Heart right ventricle (tissue), 16 donors: ENCODE measurements at regions of chr1 and their contacts with region 1.

Region 1: DNA sequence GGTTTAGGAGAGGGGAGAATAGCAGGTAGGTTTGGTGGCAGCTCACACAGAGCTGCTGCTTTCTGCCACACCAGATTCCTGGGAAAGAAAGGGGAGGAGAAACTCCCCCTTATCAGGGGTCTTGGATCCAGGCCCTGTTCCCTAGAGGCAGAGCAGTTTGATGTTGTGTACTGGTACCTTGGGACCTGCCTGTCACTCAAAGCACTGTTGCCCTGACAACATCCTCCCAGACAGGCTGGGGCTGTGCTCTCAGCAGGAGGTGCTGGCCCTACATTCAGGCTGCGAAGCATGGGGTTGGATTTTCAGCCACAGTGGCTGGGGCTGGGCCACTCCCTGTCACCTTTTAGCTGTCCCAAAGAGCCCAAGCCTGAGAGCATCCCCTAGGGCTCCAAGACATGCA is 188.0 kb downstream of the GRIK3 start:
- DNase-seq: no peak
- ATAC-seq: no peak
- H3K4me3 ChIP-seq: no peak overlapping the region
- H3K27ac ChIP-seq: no peak overlapping the region
- H3K4me1 ChIP-seq: no peaks in the 10 kb centered on the region
- H3K27me3 ChIP-seq: peaks cover 0 to 95% (median 67%) of the 10 kb centered on the region in 7 donors
- CTCF ChIP-seq: no peak

Region 2: DNA sequence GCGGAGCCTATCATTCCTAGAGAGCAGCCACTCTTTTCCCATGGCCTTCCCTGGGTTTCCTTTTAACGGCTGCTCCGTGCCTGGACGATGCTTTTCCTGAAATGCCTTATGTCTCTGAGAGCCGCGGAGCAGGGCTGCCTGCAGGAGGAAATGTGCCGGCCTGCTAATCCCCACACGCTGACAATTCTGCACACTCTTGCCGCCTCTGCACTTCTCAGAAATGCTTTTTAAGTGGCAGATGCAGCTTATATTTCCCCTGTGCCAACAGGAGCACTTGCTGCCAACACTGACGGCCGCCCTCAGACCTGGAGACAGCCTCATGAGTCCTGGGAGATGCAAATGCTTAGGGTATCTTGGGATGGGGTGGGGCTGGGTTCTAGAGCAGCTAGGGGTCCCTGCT is 65.3 kb before region 1 on chr1:
- intact Hi-C with region 1: loop called in 1 of 10 experiments (anchors 10 kb)
- DNase-seq: no peak
- ATAC-seq: no peak
- H3K4me3 ChIP-seq: no peak overlapping the region
- H3K27ac ChIP-seq: no peak overlapping the region
- H3K4me1 ChIP-seq: no peaks in the 10 kb centered on the region
- H3K27me3 ChIP-seq: peaks cover 0 to 67% (median 55%) of the 10 kb centered on the region in 7 donors
- CTCF ChIP-seq: no peak